AG04449 (cell line): ENCODE measurements at regions of chr21 and their contacts with region 1.

Region 1: GRCh38 chr21:26881504-26882228 is 36.5 kb upstream of the ADAMTS1 start:
- DNase-seq: no peak
- H3K4me3 ChIP-seq: no peak overlapping the region
- CTCF ChIP-seq: peak; percentile 25

Region 2: DNA sequence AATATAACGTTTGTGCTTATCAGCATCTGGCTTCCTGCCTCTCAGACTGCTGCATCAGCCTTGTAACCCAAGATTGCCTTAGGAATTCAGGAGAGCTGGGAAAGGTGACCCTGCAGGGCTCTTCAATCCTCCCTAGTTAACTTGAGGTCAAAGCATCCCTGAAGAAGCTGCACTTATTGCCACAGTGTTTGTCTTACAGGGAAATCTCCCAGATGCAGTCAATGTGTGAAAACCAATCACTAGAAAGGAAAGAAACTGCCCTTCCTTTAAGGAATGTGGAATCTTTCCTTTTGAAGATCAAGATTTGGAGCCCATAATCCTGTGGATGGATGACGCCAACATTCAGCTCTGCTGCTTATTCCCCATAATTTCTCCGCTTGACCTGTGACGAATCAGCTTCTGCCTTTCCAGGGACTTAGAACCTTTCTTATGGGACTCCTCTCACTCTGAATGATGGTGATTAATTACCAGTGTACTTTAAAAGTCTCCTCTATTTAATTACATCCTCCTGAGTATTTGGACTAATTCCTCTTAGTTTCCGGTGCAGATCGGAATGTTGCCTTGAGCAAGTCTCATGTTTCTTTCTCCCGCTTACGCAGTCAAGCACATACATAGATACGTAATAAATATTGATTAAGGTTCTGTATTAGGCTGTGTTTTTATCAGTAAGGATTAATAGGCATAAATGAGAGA is 70.9 kb after region 1 on chr21:
- CTCF ChIA-PET with region 1: no interaction called
- POLR2A ChIA-PET with region 1: no interaction called
- DNase-seq: no peak
- H3K4me3 ChIP-seq: no peak overlapping the region
- CTCF ChIP-seq: no peak

Region 3: GRCh38 chr21:27001526-27001925 is 119.9 kb after region 1 on chr21:
- CTCF ChIA-PET with region 1: no interaction called
- POLR2A ChIA-PET with region 1: no interaction called
- DNase-seq: no peak
- H3K4me3 ChIP-seq: no peak overlapping the region
- CTCF ChIP-seq: no peak

Region 4: DNA sequence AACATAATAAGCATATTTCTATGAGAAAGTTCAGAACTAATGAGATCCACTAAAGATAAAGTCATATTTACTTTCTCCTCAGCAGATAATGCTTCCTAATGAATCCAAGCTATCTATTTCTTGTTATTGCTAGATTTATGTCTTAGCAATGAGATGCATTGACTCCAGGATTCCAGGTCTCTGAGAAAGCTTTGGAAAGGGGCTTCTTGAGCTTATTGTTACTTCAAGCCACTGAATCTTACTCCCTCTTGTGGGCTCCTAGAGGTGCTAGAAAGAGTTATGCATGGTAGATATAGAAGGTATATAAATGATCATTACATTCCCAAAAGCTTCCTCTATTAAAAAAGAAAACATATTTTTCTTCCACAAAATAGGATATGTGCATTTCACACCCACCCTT is 331.6 kb after region 1 on chr21:
- CTCF ChIA-PET with region 1: interaction called, 21 read pairs
- POLR2A ChIA-PET with region 1: no interaction called
- DNase-seq: no peak
- H3K4me3 ChIP-seq: no peak overlapping the region
- CTCF ChIP-seq: peak; percentile 30

Region 5: GRCh38 chr21:27219068-27219467 is 337.4 kb after region 1 on chr21:
- CTCF ChIA-PET with region 1: interaction called, 21 read pairs
- POLR2A ChIA-PET with region 1: no interaction called
- DNase-seq: no peak
- H3K4me3 ChIP-seq: no peak overlapping the region
- CTCF ChIP-seq: no peak

Region 6: GRCh38 chr21:27564684-27565301 is 683.1 kb after region 1 on chr21:
- CTCF ChIA-PET with region 1: interaction called, 35 read pairs
- POLR2A ChIA-PET with region 1: no interaction called
- DNase-seq: no peak
- H3K4me3 ChIP-seq: no peak overlapping the region
- CTCF ChIP-seq: peak; percentile 52